ENCODE measurements at regions of chr21 and their contacts with region 1.

Region 1: DNA sequence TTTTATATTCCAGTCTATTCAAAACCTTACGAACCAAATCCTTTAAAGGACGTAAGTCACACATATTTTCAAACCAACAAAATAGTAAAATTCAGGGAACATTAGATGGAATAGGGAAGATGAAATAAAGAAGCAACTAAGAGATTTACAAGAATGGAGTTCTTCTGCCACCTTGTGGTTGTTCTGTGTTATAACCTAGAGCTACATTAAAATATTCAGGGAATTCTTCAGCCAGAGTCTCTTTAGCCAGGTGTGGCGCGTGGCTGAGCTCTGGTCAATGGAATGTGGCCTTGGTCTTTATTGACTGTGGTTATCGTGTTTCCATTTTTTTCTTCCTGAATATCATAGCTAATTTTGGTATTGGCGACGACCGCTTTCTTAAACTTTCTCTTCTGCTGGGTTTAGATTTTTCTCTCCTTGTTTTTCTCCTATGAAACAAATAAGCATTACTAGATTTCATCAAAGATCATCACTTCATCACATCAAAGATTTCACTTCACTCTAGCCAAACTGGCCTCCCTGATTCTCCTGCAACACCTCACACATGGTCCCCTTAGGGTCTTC is 221.3 kb downstream of the MRPL39 start:
- DNase-seq: no peak
- H3K4me3 Mint-ChIP-seq: no peak overlapping the region
- H3K27ac Mint-ChIP-seq: no peak overlapping the region
- H3K4me1 Mint-ChIP-seq: peaks cover 7% of the 10 kb centered on the region
- H3K27me3 Mint-ChIP-seq: peaks cover 6% of the 10 kb centered on the region

Region 2: DNA sequence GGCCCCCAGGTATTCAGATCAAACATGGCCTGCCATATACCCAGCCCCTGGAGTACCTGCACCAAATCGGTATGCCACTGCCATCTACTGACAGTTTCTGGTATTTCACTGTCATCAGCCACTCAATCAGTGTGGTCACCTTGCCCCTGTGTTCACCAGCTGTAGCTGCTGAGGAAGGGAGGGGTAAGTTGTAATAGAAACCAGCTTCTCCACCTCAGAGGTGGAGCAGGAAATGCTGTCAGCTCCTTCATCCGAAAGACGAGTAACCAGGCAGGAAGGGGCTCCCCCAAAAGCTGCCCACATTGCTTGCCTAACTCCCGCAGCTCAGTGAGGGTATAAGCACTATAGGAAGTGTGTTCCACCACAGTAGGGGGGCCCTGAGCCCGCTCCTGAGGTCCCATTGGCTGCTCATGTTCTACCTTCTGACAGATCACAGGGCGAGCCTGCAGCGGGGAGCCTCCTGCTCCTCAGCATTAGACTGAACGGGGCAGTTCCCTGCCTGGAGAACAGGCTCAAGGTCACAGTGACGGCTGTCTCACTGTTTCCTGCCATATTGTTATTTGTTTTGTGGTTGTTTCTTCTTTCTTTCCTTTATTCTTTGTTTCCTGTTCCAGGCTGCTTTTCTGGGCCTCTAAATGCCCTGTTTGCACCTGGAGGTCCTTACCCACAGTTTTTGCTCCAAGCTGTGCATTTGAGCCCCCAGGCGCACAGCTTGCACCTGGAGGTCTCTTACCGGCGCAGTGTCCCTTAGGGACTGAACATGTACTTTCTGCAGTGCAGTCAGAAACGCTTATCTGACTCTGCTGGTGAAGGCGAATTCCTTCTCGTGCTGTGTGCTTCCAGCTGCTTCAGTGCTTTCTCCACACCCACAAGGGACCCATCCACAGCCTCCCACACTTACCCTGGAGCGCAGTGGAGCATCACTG is 1417.0 kb before region 1 on chr21:
- CTCF ChIA-PET with region 1: no interaction called
- intact Hi-C with region 1: loop called (anchors 10 kb)
- DNase-seq: peak; percentile 88
- H3K4me3 Mint-ChIP-seq: no peak overlapping the region
- H3K27ac Mint-ChIP-seq: peak overlapping the region; percentile 71
- H3K4me1 Mint-ChIP-seq: peaks cover 12% of the 10 kb centered on the region
- H3K27me3 Mint-ChIP-seq: no peaks in the 10 kb centered on the region

Region 3: GRCh38 chr21:24514081-24514733 is 871.8 kb before region 1 on chr21:
- CTCF ChIA-PET with region 1: no interaction called
- intact Hi-C with region 1: loop called (anchors 5 kb)
- DNase-seq: no peak
- H3K4me3 Mint-ChIP-seq: no peak overlapping the region
- H3K27ac Mint-ChIP-seq: no peak overlapping the region
- H3K4me1 Mint-ChIP-seq: no peaks in the 10 kb centered on the region
- H3K27me3 Mint-ChIP-seq: no peaks in the 10 kb centered on the region

Region 4: DNA sequence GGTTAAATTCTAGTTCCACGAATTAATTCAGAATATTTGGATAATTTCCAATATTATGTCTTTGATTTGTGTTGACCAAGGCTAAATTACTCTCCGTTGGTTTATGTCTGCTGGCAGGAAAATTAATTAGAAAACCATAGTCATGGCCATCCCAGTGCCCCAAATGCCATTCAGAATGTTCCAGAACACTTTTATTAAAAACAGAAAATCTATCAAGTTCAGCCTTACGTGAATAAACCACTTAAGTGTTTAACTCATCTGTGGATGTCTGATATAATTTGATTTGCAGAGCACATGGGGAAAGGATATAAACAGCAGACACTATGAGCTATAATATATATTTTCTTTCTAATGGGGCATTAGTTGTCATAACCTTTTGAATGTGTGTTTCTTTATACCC is 259.4 kb before region 1 on chr21:
- CTCF ChIA-PET with region 1: no interaction called
- intact Hi-C with region 1: loop called (anchors 10 kb)
- DNase-seq: no peak
- H3K4me3 Mint-ChIP-seq: no peak overlapping the region
- H3K27ac Mint-ChIP-seq: no peak overlapping the region
- H3K4me1 Mint-ChIP-seq: no peaks in the 10 kb centered on the region
- H3K27me3 Mint-ChIP-seq: no peaks in the 10 kb centered on the region

Region 5: DNA sequence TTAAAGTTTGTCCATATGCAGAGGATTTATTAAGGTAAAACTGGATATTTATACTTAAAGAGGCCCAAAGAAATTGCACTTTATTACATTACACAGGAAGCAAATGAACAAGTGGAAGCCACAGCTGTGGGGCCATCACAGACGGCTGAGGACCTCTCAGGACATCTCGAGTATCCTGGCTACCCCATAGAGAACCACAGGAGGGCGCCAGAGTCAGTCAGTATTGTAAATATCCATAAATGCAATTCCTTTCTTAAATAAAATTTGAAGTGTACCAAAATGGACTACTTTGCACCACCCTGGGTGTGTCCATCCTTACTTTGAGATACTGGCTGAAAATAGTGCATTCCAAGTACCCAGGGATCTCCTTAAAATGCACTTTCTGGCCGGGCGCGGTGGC is 35.9 kb before region 1 on chr21:
- CTCF ChIA-PET with region 1: interaction called, 32 read pairs
- intact Hi-C with region 1: loop called (anchors 1 kb)
- DNase-seq: peak; percentile 66
- H3K4me3 Mint-ChIP-seq: no peak overlapping the region
- H3K27ac Mint-ChIP-seq: no peak overlapping the region
- H3K4me1 Mint-ChIP-seq: peaks cover 7% of the 10 kb centered on the region
- H3K27me3 Mint-ChIP-seq: peaks cover 27% of the 10 kb centered on the region

Measured in activated naive CD4-positive, alpha-beta T cell treated with anti-CD3 and anti-CD28 coated beads for 36 hours (primary cell).